CD8-positive, alpha-beta T cell (primary cell): ENCODE measurements at regions of chr4 and their contacts with region 1.

Region 1: GRCh38 chr4:101169044-101170014 is 178.0 kb downstream of the PPP3CA start:
- DNase-seq: peak; percentile 6 to 81 (median 56)
- ATAC-seq: peak; percentile 92
- H3K4me3 ChIP-seq: no peak overlapping the region
- H3K4me3 Mint-ChIP-seq: no peak overlapping the region
- H3K27ac ChIP-seq: no peak overlapping the region
- H3K27ac Mint-ChIP-seq: no peak overlapping the region
- H3K4me1 ChIP-seq: no peaks in the 10 kb centered on the region
- H3K4me1 Mint-ChIP-seq: peaks cover 2% of the 10 kb centered on the region
- H3K27me3 ChIP-seq: no peaks in the 10 kb centered on the region
- H3K27me3 Mint-ChIP-seq: no peaks in the 10 kb centered on the region
- CTCF ChIP-seq: peak; percentile 66

Region 2: DNA sequence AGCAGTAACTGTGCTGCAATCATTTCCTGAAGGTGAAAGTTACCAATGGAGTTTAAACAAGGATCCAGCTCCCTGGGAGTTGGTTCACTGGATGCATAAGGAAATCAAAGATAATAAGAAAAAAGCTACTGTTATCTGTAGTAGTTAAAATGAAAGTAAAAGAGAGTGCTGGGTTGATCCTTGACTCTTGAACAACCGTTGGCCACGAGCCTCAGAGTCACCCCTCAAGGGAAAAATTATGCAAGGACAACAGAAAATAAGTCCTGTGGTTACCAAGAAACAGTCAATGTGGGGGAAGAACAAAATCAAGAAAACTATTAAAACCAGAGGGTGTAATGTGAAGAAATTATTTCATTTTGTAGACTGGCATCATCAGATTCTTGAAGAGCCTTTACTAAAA is 929.3 kb before region 1 on chr4:
- CTCF ChIA-PET with region 1: no interaction called
- POLR2A ChIA-PET with region 1: no interaction called
- intact Hi-C with region 1: no loop called
- DNase-seq: no peak
- ATAC-seq: no peak
- H3K4me3 ChIP-seq: no peak overlapping the region
- H3K4me3 Mint-ChIP-seq: no peak overlapping the region
- H3K27ac ChIP-seq: no peak overlapping the region
- H3K27ac Mint-ChIP-seq: no peak overlapping the region
- H3K4me1 ChIP-seq: no peaks in the 10 kb centered on the region
- H3K4me1 Mint-ChIP-seq: no peaks in the 10 kb centered on the region
- H3K27me3 ChIP-seq: no peaks in the 10 kb centered on the region
- H3K27me3 Mint-ChIP-seq: no peaks in the 10 kb centered on the region
- CTCF ChIP-seq: no peak

Region 3: GRCh38 chr4:100366213-100366612 is 803.1 kb before region 1 on chr4:
- CTCF ChIA-PET with region 1: no interaction called
- POLR2A ChIA-PET with region 1: no interaction called
- intact Hi-C with region 1: no loop called
- DNase-seq: no peak
- ATAC-seq: no peak
- H3K4me3 ChIP-seq: no peak overlapping the region
- H3K4me3 Mint-ChIP-seq: no peak overlapping the region
- H3K27ac ChIP-seq: no peak overlapping the region
- H3K27ac Mint-ChIP-seq: no peak overlapping the region
- H3K4me1 ChIP-seq: no peaks in the 10 kb centered on the region
- H3K4me1 Mint-ChIP-seq: no peaks in the 10 kb centered on the region
- H3K27me3 ChIP-seq: no peaks in the 10 kb centered on the region
- H3K27me3 Mint-ChIP-seq: no peaks in the 10 kb centered on the region
- CTCF ChIP-seq: no peak

Region 4: GRCh38 chr4:101037938-101038413 is 131.4 kb before region 1 on chr4:
- CTCF ChIA-PET with region 1: no interaction called
- POLR2A ChIA-PET with region 1: no interaction called
- intact Hi-C with region 1: no loop called
- DNase-seq: peak in 2 of 9 experiments; percentile 48 to 54
- ATAC-seq: no peak
- H3K4me3 ChIP-seq: no peak overlapping the region
- H3K4me3 Mint-ChIP-seq: no peak overlapping the region
- H3K27ac ChIP-seq: no peak overlapping the region
- H3K27ac Mint-ChIP-seq: peak overlapping the region; percentile 71
- H3K4me1 ChIP-seq: peaks cover 4% of the 10 kb centered on the region
- H3K4me1 Mint-ChIP-seq: peaks cover 23% of the 10 kb centered on the region
- H3K27me3 ChIP-seq: no peaks in the 10 kb centered on the region
- H3K27me3 Mint-ChIP-seq: no peaks in the 10 kb centered on the region
- CTCF ChIP-seq: no peak

Region 5: GRCh38 chr4:101135371-101136010 is 33.8 kb before region 1 on chr4:
- CTCF ChIA-PET with region 1: no interaction called
- POLR2A ChIA-PET with region 1: no interaction called
- intact Hi-C with region 1: no loop called
- DNase-seq: peak in 1 of 9 experiments; percentile 14
- ATAC-seq: no peak
- H3K4me3 ChIP-seq: no peak overlapping the region
- H3K4me3 Mint-ChIP-seq: peak overlapping the region; percentile 58
- H3K27ac ChIP-seq: peak overlapping the region in 1 of 2 experiments; percentile 22
- H3K27ac Mint-ChIP-seq: no peak overlapping the region
- H3K4me1 ChIP-seq: peaks cover 8% of the 10 kb centered on the region
- H3K4me1 Mint-ChIP-seq: peaks cover 47% of the 10 kb centered on the region
- H3K27me3 ChIP-seq: no peaks in the 10 kb centered on the region
- H3K27me3 Mint-ChIP-seq: no peaks in the 10 kb centered on the region
- CTCF ChIP-seq: no peak

Region 6: DNA sequence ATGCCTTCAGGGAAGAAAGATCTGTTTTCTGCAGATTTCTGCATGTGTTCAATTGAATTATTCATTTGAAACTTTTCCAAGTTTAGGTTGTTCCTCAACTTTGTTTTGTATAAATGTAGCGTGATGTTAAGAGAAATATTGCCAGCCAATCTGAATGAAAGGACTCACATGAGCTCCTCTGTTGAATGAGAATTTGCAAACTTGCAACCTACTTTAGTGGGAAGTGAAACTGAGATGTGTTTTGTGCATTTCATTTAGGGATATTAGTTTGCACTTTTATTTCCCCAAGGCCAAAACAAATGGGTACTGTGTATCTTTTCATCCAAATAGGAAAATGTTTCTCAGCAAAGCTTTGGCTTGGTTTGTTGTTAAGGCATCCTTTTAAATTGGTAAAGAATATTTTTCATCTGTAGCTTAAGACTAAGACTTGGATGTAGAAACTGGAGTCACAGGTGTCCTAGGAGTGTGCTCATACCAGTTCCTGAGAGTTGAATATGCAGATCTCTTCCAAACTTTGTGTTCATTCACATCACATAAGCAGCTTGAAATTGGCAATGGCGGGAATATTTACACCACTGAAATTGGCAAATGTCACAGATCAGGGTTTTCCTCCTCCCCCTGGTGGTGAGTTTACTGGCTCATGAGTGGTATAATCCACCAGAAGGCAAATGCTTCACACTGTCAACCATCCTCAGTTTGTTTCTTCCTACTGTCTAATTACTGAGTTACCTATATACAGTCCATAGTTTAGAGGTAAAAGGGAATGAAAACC is 427.6 kb after region 1 on chr4:
- CTCF ChIA-PET with region 1: interaction called, 14 read pairs
- POLR2A ChIA-PET with region 1: no interaction called
- intact Hi-C with region 1: loop called (anchors 1 kb)
- DNase-seq: peak in 6 of 9 experiments; percentile 7 to 64 (median 43)
- ATAC-seq: peak; percentile 54
- H3K4me3 ChIP-seq: no peak overlapping the region
- H3K4me3 Mint-ChIP-seq: no peak overlapping the region
- H3K27ac ChIP-seq: no peak overlapping the region
- H3K27ac Mint-ChIP-seq: no peak overlapping the region
- H3K4me1 ChIP-seq: no peaks in the 10 kb centered on the region
- H3K4me1 Mint-ChIP-seq: no peaks in the 10 kb centered on the region
- H3K27me3 ChIP-seq: no peaks in the 10 kb centered on the region
- H3K27me3 Mint-ChIP-seq: no peaks in the 10 kb centered on the region
- CTCF ChIP-seq: peak; percentile 49

Region 7: DNA sequence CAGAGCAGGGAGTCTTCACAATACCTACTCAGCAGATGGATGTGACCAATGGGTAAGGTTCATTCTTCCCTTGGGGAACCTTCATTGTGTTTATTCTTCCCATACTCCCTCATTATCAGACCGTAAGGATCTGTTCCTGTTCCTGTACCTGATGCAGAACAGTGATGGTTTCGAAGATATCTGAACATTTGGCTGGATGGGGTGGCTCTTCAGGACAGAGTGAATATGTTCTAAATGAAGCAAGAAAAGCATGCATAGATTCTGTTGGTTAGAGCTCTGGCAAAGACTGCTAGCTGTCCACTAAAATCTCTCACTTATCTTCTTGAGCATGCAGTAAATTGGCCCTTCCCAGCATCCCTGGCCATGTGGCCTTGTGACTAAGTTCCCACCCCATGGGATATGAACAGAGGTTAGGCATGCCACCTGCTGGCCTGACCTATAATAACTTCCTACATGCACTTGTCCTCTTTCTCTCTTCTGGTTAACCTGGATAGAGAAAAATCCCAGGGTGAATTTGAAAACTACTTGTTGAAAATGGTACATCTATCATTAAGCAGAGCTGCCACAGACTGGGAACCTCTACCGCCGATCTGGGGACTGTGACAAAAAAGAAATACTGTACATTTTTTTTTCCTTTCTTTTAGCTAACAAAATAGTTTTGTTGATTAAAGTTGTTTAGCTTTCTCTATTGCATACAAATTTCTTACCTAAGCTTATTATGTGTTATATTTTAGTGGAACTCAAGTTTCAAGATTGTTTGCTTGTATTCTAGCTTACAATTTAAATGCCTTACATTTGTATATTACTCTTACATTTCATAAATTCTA is 561.2 kb after region 1 on chr4:
- CTCF ChIA-PET with region 1: interaction called, 11 read pairs
- POLR2A ChIA-PET with region 1: no interaction called
- intact Hi-C with region 1: loop called (anchors 1 kb)
- DNase-seq: peak in 7 of 9 experiments; percentile 24 to 69 (median 48)
- ATAC-seq: peak; percentile 67
- H3K4me3 ChIP-seq: no peak overlapping the region
- H3K4me3 Mint-ChIP-seq: no peak overlapping the region
- H3K27ac ChIP-seq: no peak overlapping the region
- H3K27ac Mint-ChIP-seq: no peak overlapping the region
- H3K4me1 ChIP-seq: no peaks in the 10 kb centered on the region
- H3K4me1 Mint-ChIP-seq: no peaks in the 10 kb centered on the region
- H3K27me3 ChIP-seq: no peaks in the 10 kb centered on the region
- H3K27me3 Mint-ChIP-seq: peaks cover 5% of the 10 kb centered on the region
- CTCF ChIP-seq: peak; percentile 65

Region 8: GRCh38 chr4:102255454-102255853 is 1086.1 kb after region 1 on chr4:
- CTCF ChIA-PET with region 1: interaction called, 4 read pairs
- POLR2A ChIA-PET with region 1: no interaction called
- intact Hi-C with region 1: loop called in 1 of 2 experiments (anchors 2 kb)
- DNase-seq: no peak
- ATAC-seq: no peak
- H3K4me3 ChIP-seq: no peak overlapping the region
- H3K4me3 Mint-ChIP-seq: no peak overlapping the region
- H3K27ac ChIP-seq: no peak overlapping the region
- H3K27ac Mint-ChIP-seq: no peak overlapping the region
- H3K4me1 ChIP-seq: no peaks in the 10 kb centered on the region
- H3K4me1 Mint-ChIP-seq: no peaks in the 10 kb centered on the region
- H3K27me3 ChIP-seq: no peaks in the 10 kb centered on the region
- H3K27me3 Mint-ChIP-seq: no peaks in the 10 kb centered on the region
- CTCF ChIP-seq: no peak

Region 9: DNA sequence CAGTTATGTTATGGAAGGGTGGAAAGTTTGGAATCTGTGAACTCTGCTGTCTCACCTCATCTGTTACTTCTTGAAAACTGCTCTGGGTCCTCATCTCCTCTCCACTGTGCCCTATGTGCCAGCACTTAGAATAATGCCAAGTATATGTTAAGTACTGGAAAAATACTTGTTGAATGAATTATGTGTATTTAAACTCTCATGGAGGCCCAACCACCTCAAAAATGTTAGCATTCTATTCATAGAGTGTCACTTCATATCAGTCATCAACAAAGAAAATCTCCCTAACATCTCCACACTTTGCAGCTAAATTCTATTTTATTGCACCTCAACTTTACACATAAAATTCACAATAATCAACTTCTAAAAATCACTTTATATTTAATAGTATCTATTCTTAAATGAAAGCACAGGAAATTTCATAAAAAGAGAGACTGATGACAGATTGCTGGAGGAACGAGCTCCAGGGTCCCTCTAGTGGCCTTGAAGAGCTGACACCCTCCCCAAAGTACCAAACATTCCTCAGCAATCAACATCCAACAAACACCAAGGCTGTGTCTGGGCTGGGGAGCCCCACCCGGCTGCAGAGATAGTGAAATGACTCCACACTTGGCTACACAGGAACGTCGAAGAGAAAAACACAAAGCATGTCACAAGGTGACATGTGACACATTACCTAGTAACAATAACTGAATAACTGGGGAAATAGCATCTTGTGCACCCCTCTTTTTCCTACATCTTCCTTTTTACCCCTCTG is 1130.2 kb after region 1 on chr4:
- CTCF ChIA-PET with region 1: no interaction called
- POLR2A ChIA-PET with region 1: no interaction called
- intact Hi-C with region 1: loop called in 1 of 2 experiments (anchors 5 kb)
- DNase-seq: peak in 7 of 9 experiments; percentile 2 to 53 (median 27)
- ATAC-seq: peak; percentile 67
- H3K4me3 ChIP-seq: no peak overlapping the region
- H3K4me3 Mint-ChIP-seq: no peak overlapping the region
- H3K27ac ChIP-seq: no peak overlapping the region
- H3K27ac Mint-ChIP-seq: no peak overlapping the region
- H3K4me1 ChIP-seq: no peaks in the 10 kb centered on the region
- H3K4me1 Mint-ChIP-seq: peaks cover 2% of the 10 kb centered on the region
- H3K27me3 ChIP-seq: no peaks in the 10 kb centered on the region
- H3K27me3 Mint-ChIP-seq: no peaks in the 10 kb centered on the region
- CTCF ChIP-seq: peak; percentile 66